ENCODE measurements at regions of chr2 and their contacts with region 1.

Region 1: DNA sequence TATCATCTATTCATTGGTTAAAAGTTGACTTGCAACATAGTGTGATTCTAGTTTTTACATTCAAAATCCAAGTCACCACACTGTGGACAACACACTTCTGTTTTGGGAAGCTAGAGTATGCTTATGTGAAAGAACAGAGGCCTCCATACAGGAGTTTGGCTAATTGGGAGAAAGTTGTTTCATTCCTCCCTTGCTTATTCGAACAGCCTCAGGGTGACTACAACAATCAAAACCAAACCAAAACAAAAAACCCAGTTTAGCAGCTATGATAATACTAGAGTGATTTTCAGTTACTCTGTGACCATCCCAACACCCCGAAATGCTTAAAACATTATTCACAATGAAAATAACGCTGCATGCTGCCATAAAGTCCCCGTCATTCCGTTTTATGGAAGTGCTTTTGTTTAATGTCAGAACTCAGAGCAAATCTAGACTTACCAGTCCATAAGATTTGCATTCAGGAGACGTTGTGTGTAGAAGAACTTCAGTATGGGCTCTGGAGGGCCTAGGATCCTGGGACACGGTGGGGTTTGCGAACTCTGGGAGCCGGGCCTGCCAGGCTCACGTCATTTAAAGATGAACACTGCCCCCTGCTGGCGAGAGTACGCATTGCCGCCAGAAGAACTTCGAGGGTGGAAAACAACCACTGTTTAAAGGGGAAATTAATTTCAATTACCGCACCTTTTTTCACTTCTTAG is 111.4 kb downstream of the FTCDNL1 start:
- DNase-seq: no peak
- H3K4me3 ChIP-seq: no peak overlapping the region
- H3K27me3 ChIP-seq: 0 out of 2 replicates have a peak, but pooled peaks cover 2% of the 10 kb centered on the region
- CTCF ChIP-seq: peak; percentile 85

Region 2: DNA sequence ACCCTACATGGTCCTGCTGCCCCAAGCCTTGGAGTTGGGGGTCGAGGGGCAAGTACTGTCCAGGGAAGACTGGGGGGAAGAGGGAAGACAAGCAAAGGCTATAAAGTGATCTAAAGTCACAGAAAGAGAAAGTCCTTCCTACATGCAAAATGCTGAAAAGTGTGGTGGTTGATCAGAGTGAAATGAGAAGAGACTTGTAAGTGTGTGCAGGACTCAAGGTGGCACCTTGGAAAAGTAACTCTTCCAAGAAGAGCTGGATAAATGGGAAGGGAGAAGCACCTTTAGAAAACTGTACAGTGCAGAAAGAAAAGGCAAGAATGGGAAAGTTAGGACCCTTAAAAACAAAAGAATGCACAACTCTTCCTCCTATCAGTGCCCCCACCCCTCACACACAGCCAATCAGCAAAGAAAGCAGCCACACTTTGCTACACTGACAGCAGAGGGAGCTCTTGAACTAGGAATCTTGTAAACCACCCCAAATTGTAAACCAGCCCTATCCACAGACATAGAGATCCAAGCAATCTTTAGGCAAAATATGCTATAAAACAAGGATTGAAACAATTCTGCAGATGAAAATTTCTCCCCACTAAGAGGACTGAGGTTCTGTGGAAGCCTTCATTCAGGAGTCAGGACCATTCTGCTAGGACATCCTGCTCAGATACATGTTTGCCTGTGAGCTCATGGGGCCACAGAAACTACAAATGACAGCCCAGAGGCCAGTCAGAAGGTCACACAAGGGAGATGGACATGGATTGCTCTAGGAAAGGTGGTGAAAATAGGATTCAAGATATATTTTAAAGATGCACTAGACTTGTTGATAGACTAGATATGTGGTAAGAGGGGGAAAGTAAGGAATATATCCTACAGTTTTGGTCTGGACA is 35.0 kb before region 1 on chr2:
- CTCF ChIA-PET with region 1: interaction called, 49 read pairs
- POLR2A ChIA-PET with region 1: no interaction called
- DNase-seq: no peak
- H3K4me3 ChIP-seq: no peak overlapping the region
- H3K27me3 ChIP-seq: no peaks in the 10 kb centered on the region
- CTCF ChIP-seq: peak; percentile 70

Region 3: GRCh38 chr2:199713746-199714145 is 25.8 kb before region 1 on chr2:
- CTCF ChIA-PET with region 1: interaction called, 16 read pairs
- POLR2A ChIA-PET with region 1: no interaction called
- DNase-seq: no peak
- H3K4me3 ChIP-seq: no peak overlapping the region
- H3K27me3 ChIP-seq: no peaks in the 10 kb centered on the region
- CTCF ChIP-seq: no peak